PC-9 (cell line): ENCODE measurements at regions of chr19 and their contacts with region 1.

Region 1: DNA sequence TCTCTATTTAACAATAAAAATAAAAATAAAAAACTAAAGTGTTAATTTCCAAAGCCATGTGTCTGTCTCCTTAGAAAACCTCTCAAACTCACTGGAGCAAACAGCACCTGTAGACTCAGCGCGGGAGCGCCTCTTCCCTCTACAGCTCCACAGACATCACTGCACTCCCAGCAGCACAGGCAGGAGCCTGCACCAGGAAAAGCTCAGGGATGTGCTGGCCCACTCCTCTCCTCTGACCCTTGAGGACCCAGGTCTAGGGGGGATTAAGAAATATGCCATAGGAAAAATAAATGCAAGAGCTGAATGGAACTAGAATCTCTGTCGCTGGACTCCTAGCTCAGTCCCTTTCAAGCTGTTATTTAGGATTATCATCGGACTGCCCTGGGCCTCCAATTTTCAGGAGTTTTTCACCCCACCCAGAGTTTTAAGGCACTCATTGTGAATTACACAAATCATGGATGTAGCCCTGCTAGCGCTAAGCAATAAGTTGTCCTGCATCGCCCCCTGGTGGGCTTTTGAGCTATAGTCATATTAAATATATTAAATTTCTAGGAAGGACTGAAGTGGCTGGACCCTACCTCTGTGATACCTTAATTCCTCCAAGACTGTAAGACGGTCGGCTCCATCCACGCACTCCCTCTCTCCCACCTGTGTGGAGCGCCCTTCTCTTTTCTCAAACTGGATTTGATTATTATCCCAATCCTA is 333.9 kb downstream of the UQCRFS1 start:
- DNase-seq: peak in 1 of 2 experiments; percentile 40
- H3K4me3 ChIP-seq: no peak overlapping the region
- H3K27ac ChIP-seq: no peak overlapping the region
- H3K4me1 ChIP-seq: no peaks in the 10 kb centered on the region
- H3K27me3 ChIP-seq: peaks cover 62% of the 10 kb centered on the region
- CTCF ChIP-seq: peak; percentile 87

Region 2: DNA sequence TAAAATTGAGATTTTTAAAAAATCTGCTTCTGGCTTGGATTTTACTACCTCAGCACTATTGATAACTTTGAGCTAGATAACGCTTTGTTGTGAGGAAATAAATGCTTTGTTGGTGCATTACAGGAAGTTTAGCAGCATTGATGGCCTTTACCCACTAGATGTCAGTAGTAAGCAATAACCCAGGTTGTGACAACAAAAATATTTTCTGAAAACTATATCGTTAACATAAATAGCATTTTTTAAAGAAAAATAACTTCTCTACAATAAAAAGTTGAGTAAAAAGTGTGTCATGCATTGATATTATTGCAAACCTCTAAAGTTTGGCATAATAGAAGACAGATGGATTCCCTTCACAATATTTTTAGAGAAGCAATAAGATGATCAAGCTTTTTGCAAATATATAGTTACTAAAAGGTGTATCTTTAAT is 912.6 kb before region 1 on chr19:
- CTCF ChIA-PET with region 1: no interaction called
- POLR2A ChIA-PET with region 1: no interaction called
- intact Hi-C with region 1: loop called (anchors 10 kb)
- DNase-seq: no peak
- H3K4me3 ChIP-seq: no peak overlapping the region
- H3K27ac ChIP-seq: no peak overlapping the region
- H3K4me1 ChIP-seq: no peaks in the 10 kb centered on the region
- H3K27me3 ChIP-seq: no peaks in the 10 kb centered on the region; the same call in 1 of the 2 replicates
- CTCF ChIP-seq: peak; percentile 72

Region 3: GRCh38 chr19:28619816-28620429 is 259.1 kb before region 1 on chr19:
- CTCF ChIA-PET with region 1: no interaction called
- POLR2A ChIA-PET with region 1: no interaction called
- intact Hi-C with region 1: no loop called
- DNase-seq: no peak
- H3K4me3 ChIP-seq: no peak overlapping the region
- H3K27ac ChIP-seq: no peak overlapping the region
- H3K4me1 ChIP-seq: no peaks in the 10 kb centered on the region
- H3K27me3 ChIP-seq: no peaks in the 10 kb centered on the region
- CTCF ChIP-seq: no peak

Region 4: DNA sequence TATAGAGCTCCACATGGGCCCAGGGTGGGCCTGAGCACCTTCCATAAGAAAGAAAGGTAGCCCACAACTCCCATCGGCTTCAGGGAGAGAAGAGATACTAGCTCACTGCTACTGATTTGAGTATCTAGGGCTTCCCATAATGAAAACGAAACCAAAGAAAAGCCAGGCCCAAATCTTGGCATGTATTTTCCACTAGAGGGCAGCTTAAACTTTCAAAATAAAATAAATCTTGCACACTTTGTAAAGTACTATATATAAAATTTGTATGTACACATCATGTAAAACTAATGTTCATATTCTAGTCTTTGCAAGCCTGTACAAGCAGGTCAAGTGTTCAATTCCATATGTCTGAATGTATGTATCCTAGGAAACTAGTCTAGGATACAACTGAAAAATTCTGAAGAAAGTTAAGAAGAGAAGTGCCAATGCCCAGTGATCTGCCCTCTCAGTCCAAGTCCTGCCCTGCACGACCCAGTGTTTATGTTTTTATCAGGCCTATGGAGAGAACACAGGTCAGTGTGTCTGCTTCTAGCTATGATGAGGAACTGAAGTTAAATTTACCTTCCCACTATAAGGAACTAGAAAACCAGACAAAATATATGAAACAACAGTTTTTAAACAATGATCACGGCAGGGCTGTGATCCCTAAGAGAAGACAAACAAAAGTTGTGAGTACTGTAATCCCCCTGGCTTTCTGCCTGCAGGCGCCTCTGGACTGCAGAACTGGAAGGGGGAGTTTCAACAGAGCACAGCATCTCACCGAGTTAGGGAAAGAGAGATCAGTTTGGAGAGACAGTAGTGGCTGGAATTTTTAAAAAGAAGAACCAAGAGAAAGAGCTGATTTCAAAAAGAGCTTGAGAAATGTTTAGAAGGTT is 141.8 kb before region 1 on chr19:
- CTCF ChIA-PET with region 1: no interaction called
- POLR2A ChIA-PET with region 1: no interaction called
- intact Hi-C with region 1: loop called (anchors 10 kb)
- DNase-seq: no peak
- H3K4me3 ChIP-seq: no peak overlapping the region
- H3K27ac ChIP-seq: no peak overlapping the region
- H3K4me1 ChIP-seq: no peaks in the 10 kb centered on the region
- H3K27me3 ChIP-seq: no peaks in the 10 kb centered on the region
- CTCF ChIP-seq: peak; percentile 63